ENCODE measurements at regions of chr4 and their contacts with region 1.

Region 1: DNA sequence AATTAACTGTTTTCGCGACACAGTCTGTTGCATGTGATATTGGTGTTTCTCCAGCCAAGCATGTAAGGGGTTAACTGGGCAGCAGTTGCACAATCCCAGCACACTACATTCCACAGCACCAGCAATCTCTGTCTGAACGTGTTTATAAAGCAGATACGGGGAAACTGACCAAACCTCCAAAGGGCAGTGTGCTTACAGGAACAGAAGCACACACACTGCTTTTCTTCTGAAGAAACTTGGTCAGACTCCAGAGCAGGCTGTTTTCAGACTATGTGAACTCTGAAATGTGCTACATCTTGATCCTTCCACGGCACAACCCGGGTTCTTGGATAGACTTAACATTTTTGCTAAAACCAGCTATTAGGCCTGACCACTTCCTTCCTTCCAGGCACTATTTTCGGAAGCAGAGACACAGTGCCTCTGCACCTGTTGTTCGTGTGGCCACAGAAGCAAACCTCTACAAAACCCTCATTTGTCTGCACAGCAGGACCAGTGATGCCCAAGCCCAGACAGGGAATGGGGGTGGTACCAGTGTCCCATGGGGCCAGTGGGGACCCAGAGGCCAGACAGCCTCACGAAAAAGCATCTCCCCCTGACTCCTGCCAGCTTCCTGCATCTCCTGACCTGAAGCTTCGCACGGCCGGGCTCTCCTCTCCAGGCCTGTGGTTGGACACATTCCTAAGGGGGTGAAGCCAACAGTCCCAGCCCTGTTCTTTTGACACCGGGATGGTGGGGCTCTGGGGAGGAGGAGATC is 90.1 kb downstream of the IRF2 start:
- DNase-seq: peak in 2 of 3 donors; percentile 46 to 70
- ATAC-seq: peak; percentile 83 to 84
- H3K4me3 ChIP-seq: peak overlapping the region; percentile 30
- H3K27ac ChIP-seq: peak overlapping the region; percentile 54
- H3K4me1 ChIP-seq: peaks cover 37% of the 10 kb centered on the region
- H3K27me3 ChIP-seq: no peaks in the 10 kb centered on the region

Region 2: GRCh38 chr4:184282251-184282713 is 102.0 kb before region 1 on chr4:
- intact Hi-C with region 1: loop called in 1 of 4 experiments (anchors 10 kb)
- DNase-seq: no peak
- ATAC-seq: peak; percentile 61 to 68
- H3K4me3 ChIP-seq: no peak overlapping the region
- H3K27ac ChIP-seq: no peak overlapping the region
- H3K4me1 ChIP-seq: peaks cover 2% of the 10 kb centered on the region
- H3K27me3 ChIP-seq: no peaks in the 10 kb centered on the region

Region 3: DNA sequence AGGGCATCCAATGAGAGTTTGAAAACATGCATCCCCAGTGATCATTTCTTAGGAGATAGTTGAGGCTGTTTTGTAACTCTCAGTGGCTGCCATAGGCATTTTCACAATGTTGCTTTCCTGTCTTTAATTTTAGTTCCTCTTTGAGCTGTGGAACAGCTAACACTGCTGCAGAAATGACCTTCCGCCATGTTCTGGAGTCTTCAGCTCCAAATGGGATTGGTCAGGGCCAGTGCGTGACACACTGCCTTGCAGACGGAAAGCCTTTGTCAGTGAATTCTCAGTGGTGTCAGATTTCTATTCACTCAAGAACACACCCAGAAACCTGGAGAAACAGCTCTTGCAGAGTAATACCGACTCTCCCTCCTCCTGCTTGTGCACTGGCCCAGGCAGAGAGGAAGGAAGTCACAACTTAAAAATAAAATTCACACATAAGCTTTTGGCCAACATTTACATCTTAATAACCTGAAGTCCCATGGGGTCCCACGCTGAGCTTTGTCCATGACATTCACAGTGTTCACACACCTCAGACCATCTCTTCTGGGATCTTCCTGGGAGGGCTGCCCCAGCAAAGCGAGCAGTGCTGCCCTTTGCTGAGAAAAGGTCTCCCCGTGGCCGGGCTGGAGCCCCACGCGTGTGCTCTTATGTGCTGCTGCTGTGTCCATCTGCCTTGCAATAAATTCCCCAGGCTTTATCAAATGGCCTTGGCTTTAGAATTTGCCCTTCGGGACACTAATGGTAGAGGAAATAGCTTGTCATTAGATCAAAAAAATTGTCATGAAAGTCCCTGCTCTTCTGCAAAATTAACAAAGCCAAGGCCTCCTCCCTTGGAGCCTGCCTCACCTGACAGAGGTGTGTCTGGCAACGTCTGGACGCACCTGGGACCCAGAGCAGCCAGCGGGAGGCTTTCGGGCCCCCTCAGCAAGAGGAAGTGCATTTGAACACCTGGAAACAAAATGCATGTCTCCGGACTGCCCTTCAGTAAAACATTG is 36.7 kb before region 1 on chr4:
- intact Hi-C with region 1: loop called in 2 of 4 experiments (anchors 5 kb)
- DNase-seq: peak; percentile 67 to 76 (median 74)
- ATAC-seq: peak; percentile 35 to 58
- H3K4me3 ChIP-seq: no peak overlapping the region
- H3K27ac ChIP-seq: peak overlapping the region; percentile 90
- H3K4me1 ChIP-seq: peaks cover 24% of the 10 kb centered on the region
- H3K27me3 ChIP-seq: no peaks in the 10 kb centered on the region

Region 4: GRCh38 chr4:184424993-184425758 is 40.9 kb after region 1 on chr4:
- intact Hi-C with region 1: no loop called
- DNase-seq: peak in 1 of 3 donors; percentile 40
- ATAC-seq: peak; percentile 22 to 46
- H3K4me3 ChIP-seq: no peak overlapping the region
- H3K27ac ChIP-seq: no peak overlapping the region
- H3K4me1 ChIP-seq: peaks cover 6% of the 10 kb centered on the region
- H3K27me3 ChIP-seq: no peaks in the 10 kb centered on the region

Region 5: DNA sequence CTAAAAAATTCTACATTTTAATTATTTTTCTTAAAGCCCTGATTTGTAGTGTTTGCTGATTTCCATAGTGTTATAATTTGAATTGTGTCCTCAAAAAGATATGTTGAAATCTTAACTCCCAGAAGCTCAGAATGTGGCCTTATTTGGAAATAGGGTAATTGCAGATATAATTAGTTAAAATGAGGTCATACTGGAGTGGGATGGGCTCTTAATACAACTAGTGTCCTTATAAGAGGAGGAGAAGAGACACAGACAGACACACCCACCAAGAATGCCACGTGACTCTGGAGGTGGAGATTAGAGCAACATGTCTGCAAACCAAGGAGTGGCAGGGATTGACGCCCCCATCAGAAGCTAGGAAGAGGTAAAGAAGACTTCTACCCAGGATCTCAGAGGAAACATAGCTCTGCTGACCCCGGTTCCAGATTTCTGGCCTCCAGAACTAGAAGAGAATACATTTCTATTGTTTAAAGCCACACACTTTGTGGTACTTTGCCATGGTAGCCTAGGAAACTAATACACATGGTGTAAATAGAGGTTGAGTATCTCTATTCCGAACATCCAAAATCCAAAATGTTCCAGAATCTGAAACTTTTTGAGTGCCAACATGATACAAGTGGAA is 160.7 kb after region 1 on chr4:
- intact Hi-C with region 1: no loop called
- DNase-seq: peak in 1 of 3 donors; percentile 47
- ATAC-seq: peak in 1 of 2 donors; percentile 70
- H3K4me3 ChIP-seq: no peak overlapping the region
- H3K27ac ChIP-seq: no peak overlapping the region
- H3K4me1 ChIP-seq: no peaks in the 10 kb centered on the region
- H3K27me3 ChIP-seq: no peaks in the 10 kb centered on the region